ENCODE measurements at regions of chr19 and their contacts with region 1.

Region 1: DNA sequence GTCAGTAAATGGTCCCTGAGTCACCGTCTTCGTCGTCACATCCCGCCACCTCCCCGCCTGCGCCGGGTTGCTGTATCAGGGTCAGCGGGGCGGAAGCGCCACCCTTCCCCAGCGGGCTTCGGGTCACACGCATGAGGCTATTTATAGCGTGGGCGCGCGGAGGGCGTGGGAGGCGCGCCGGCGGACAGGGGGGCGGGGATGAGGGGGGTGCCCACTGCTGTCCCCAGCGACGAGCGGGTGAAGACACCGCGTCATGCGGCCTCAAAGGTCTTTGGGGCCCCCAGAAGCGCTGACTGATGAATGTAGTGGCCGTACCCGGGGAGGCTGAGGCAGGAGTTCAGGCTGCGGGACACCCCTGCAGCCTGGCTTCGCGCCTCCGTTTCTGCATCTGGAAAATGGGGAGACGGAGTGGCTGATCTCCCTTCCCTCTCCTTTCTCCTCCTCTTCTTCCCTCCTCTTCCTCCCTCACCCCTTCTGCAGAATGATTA is 7.9 kb downstream of the UNC13A start:
- DNase-seq: peak; percentile 65
- ATAC-seq: peak; percentile 83
- H3K4me3 Mint-ChIP-seq: peak overlapping the region; percentile 18
- H3K27ac Mint-ChIP-seq: no peak overlapping the region
- H3K4me1 Mint-ChIP-seq: peaks cover 5% of the 10 kb centered on the region
- H3K27me3 Mint-ChIP-seq: peaks cover 48% of the 10 kb centered on the region

Region 2: GRCh38 chr19:17915951-17916593 is 235.8 kb after region 1 on chr19:
- CTCF ChIA-PET with region 1: no interaction called
- POLR2A ChIA-PET with region 1: no interaction called
- intact Hi-C with region 1: loop called in 1 of 2 experiments (anchors 10 kb)
- DNase-seq: no peak
- ATAC-seq: no peak
- H3K4me3 Mint-ChIP-seq: no peak overlapping the region
- H3K27ac Mint-ChIP-seq: no peak overlapping the region
- H3K4me1 Mint-ChIP-seq: no peaks in the 10 kb centered on the region
- H3K27me3 Mint-ChIP-seq: peaks cover 2% of the 10 kb centered on the region